ENCODE measurements at regions of chr7 and their contacts with region 1.

Region 1: GRCh38 chr7:29408841-29409243 is 154.8 kb upstream of the PRR15 start:
- DNase-seq: peak in 1 of 3 donors; percentile 87
- ATAC-seq: peak; percentile 59
- H3K4me3 ChIP-seq: no peak overlapping the region
- H3K4me1 ChIP-seq: peaks cover 9% of the 10 kb centered on the region
- CTCF ChIP-seq: peak; percentile 54

Region 2: DNA sequence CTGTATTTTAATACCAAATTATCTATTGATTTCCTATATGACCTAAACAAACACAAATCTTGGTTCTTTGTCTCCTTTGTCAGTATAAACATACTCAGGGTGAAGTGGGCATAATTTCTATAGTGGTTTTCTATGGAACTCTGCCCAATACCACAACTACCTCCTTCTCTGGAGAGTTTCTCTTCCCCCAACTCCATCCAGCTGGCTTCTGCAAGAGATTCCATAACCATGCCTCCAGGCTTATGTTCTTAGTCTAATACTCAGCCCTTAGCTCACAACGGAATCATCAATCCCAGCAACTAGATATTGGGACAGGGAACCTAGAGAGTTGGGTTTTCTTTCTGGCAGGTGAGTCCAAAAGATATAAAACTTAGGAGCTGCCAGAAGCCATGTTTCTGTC is 578.0 kb before region 1 on chr7:
- intact Hi-C with region 1: no loop called
- DNase-seq: no peak
- ATAC-seq: no peak
- H3K4me3 ChIP-seq: no peak overlapping the region
- H3K4me1 ChIP-seq: no peaks in the 10 kb centered on the region
- CTCF ChIP-seq: no peak

Region 3: GRCh38 chr7:28921822-28922221 is 487.0 kb before region 1 on chr7:
- intact Hi-C with region 1: loop called in 1 of 2 experiments (anchors 5 kb)
- DNase-seq: peak in 1 of 3 donors; percentile 76
- ATAC-seq: peak; percentile 95
- H3K4me3 ChIP-seq: no peak overlapping the region
- H3K4me1 ChIP-seq: no peaks in the 10 kb centered on the region
- CTCF ChIP-seq: peak; percentile 54

Region 4: GRCh38 chr7:29113384-29114103 is 295.3 kb before region 1 on chr7:
- intact Hi-C with region 1: loop called (anchors 5 to 10 kb)
- DNase-seq: peak in 1 of 3 donors; percentile 70
- ATAC-seq: peak; percentile 83
- H3K4me3 ChIP-seq: no peak overlapping the region
- H3K4me1 ChIP-seq: no peaks in the 10 kb centered on the region
- CTCF ChIP-seq: no peak

Region 5: GRCh38 chr7:29189743-29190201 is 219.1 kb before region 1 on chr7:
- intact Hi-C with region 1: loop called in 1 of 2 experiments (anchors 5 kb)
- DNase-seq: peak; percentile 72 to 85 (median 81)
- ATAC-seq: peak; percentile 71
- H3K4me3 ChIP-seq: no peak overlapping the region
- H3K4me1 ChIP-seq: no peaks in the 10 kb centered on the region
- CTCF ChIP-seq: peak; percentile 78

Region 6: DNA sequence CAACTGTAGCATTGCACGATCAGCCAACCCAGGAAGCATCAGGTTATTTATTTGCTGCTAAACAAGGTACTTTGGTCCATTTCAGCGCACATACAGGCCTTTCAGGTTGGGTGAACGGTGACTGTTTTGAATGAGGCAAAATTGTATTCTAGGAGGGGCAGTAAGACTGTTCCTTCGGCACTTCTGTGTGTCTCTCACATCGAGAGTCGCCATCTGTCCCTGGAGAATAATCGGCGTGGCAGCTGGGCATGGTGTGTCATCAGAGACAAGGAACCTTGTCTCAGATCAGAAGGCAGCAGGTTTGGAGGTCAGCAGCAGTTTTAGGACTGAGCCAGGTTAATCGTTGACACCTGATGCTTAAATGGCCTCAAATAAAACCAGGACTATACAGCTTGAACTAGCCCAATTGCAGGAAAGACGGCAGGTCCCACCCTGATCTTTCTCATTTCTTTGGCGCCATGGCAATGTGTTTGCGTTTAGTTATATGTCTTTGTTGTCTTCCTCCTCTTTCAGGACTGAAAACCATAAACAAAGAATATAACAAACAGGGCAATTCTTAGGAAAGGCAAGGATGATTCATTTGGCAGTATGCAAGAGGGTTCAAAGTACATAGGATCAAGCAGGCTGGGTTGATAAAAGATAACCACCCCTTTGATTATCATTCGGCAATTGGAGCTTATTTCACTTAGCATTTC is 62.7 kb after region 1 on chr7:
- intact Hi-C with region 1: no loop called
- DNase-seq: peak; percentile 73 to 83 (median 79)
- ATAC-seq: peak; percentile 83
- H3K4me3 ChIP-seq: no peak overlapping the region
- H3K4me1 ChIP-seq: peaks cover 32% of the 10 kb centered on the region
- CTCF ChIP-seq: no peak

Measured in mucosa of descending colon (tissue), 3 donors.